MCF 10A (cell line): ENCODE measurements at regions of chr15 and their contacts with region 1.

Region 1: DNA sequence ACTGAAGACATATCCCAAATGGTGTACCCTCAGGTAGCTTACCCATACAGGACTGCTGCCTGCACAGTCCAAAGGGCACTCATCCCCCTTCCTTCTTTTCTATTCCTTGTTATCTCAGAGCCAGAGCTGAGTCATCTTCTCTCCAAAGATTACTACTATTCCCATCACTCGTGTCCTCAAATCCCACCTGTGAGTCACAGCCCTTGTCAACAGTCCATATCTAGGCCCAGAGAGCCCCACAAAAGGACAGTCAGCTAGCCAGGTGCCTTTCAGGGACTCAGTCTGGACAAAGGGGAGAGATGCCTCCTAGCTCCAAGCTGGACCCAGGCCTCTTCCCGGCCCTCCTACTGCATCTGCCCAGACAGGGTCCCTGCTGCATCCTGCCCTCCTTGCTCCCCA is 11.0 kb downstream of the PARP16 start:
- DNase-seq: no peak
- H3K4me3 Mint-ChIP-seq: no peak overlapping the region
- H3K27ac Mint-ChIP-seq: no peak overlapping the region
- H3K4me1 Mint-ChIP-seq: no peaks in the 10 kb centered on the region
- H3K27me3 Mint-ChIP-seq: no peaks in the 10 kb centered on the region
- CTCF ChIP-seq: no peak

Region 2: DNA sequence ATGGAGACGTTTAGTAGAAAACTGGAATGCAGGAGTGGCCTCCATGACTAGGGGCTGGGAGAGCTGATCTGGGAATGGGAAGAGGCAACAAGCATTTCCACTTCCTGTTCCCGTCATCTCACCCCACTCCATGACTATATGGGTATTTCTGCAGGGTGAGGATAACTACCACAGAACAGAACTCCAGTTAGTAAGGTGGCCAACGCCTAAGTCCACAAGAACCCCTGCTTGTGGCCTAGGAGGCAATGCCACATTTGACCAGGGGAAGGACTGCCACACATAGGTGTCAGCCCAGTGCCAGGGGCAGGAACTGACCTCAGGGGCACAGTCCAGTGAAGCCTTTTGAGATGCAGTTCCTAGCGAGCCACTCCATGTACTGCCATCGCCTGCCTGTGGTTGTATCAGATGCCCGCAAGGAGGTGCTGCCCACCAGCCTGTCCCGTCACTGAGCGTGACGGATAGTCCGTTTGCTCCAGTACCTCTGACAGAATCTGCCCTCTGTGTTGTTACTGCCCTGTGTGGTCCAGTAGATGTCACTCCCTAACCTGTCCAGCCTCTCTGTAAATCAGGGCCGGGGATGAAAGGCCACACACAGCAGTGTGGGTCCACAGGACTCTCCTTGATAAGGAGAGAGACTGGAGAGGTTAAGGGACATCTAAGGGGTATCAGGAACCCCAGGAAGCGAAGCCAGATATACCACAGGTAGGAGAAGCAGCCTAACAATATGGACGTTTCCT is 242.8 kb before region 1 on chr15:
- CTCF ChIA-PET with region 1: interaction called, 13 read pairs
- POLR2A ChIA-PET with region 1: no interaction called
- intact Hi-C with region 1: loop called (anchors 1 kb)
- DNase-seq: peak; percentile 84
- H3K4me3 Mint-ChIP-seq: no peak overlapping the region
- H3K27ac Mint-ChIP-seq: no peak overlapping the region
- H3K4me1 Mint-ChIP-seq: peaks cover 7% of the 10 kb centered on the region
- H3K27me3 Mint-ChIP-seq: no peaks in the 10 kb centered on the region
- CTCF ChIP-seq: peak; percentile 45

Region 3: GRCh38 chr15:65184868-65185738 is 90.6 kb before region 1 on chr15 and contains the start of gene CLPX:
- CTCF ChIA-PET with region 1: interaction called, 69 read pairs
- POLR2A ChIA-PET with region 1: interaction called, 13 read pairs
- intact Hi-C with region 1: no loop called
- DNase-seq: peak; percentile 94
- H3K4me3 Mint-ChIP-seq: peak within 1 kb of the TSS; percentile 94
- H3K27ac Mint-ChIP-seq: peak within 1 kb of the TSS; percentile 96
- H3K4me1 Mint-ChIP-seq: peaks cover 6% of the 10 kb centered on the region
- H3K27me3 Mint-ChIP-seq: no peaks in the 10 kb centered on the region
- CTCF ChIP-seq: no peak
- total RNA-seq, gene CLPX: 47.9 and 48.9 TPM in 2 replicates

Region 4: DNA sequence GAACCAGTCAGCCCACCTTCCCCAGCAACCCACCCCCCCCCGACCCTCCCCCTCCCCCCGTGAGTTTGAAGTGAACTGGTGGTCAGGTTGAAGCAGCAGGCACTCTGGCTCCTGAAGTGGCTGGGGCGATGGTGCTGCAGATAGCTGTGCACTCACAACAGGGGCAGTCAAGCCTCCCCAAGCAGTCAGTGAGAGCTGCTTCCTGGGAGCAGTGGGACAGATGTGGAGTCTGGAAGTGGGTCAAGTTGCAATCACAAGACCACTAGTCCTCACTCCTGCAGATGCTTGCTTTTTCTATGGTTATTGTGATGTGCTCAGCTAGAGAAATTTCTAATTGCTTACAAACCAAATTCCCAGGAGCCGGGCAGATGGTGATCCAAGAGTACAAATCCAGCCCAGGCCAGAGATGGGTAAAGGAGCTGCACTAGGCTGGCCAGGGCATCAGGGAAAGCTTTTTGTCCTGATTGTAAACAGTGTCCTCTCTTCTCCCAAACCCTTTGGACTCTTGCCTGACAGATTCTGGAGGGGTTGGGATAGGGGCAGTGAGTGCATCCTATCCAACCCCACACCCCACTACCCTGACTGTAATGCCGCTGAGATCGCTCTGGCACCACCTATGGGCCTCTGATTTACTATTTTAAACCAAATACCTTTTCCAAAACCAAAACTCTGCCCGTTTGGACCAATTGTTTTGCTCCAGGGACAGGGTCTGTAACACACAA is 80.7 kb before region 1 on chr15:
- CTCF ChIA-PET with region 1: interaction called, 69 read pairs
- POLR2A ChIA-PET with region 1: interaction called, 3 read pairs
- intact Hi-C with region 1: no loop called
- DNase-seq: no peak
- H3K4me3 Mint-ChIP-seq: no peak overlapping the region
- H3K27ac Mint-ChIP-seq: no peak overlapping the region
- H3K4me1 Mint-ChIP-seq: no peaks in the 10 kb centered on the region
- H3K27me3 Mint-ChIP-seq: no peaks in the 10 kb centered on the region
- CTCF ChIP-seq: no peak

Region 5: DNA sequence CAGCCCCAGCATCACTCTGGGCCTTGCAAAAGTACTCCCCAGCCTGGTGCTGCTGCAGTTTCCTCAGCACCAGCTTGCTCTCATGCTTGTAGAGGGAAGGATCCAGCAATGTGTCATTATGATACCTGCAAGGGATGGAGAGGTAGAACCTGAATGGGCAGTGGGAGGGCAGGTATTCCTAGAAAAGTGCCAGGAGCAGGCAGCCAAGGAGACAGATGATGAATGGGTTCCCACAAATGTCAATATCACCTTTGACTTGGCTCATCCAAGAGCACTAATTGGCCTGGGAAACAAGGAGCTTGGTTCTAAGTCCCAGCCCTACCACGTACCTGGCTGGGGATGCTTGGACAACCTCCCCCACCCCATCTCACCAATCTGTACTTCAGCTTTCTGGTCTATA is 73.8 kb before region 1 on chr15:
- CTCF ChIA-PET with region 1: interaction called, 12 read pairs
- POLR2A ChIA-PET with region 1: no interaction called
- intact Hi-C with region 1: no loop called
- DNase-seq: no peak
- H3K4me3 Mint-ChIP-seq: no peak overlapping the region
- H3K27ac Mint-ChIP-seq: no peak overlapping the region
- H3K4me1 Mint-ChIP-seq: no peaks in the 10 kb centered on the region
- H3K27me3 Mint-ChIP-seq: no peaks in the 10 kb centered on the region
- CTCF ChIP-seq: no peak

Region 6: GRCh38 chr15:65286704-65287519 is 11.2 kb after region 1 on chr15 and contains the start of gene PARP16:
- CTCF ChIA-PET with region 1: interaction called, 53 read pairs
- POLR2A ChIA-PET with region 1: interaction called, 19 read pairs
- intact Hi-C with region 1: no loop called
- DNase-seq: peak; percentile 81
- H3K4me3 Mint-ChIP-seq: peak within 1 kb of the TSS; percentile 79
- H3K27ac Mint-ChIP-seq: peak within 1 kb of the TSS; percentile 39
- H3K4me1 Mint-ChIP-seq: peaks cover 4% of the 10 kb centered on the region
- H3K27me3 Mint-ChIP-seq: no peaks in the 10 kb centered on the region
- CTCF ChIP-seq: peak; percentile 22
- total RNA-seq, gene PARP16: 5.9 and 6.1 TPM in 2 replicates

Region 7: GRCh38 chr15:65310431-65311137 is 34.9 kb after region 1 on chr15:
- CTCF ChIA-PET with region 1: no interaction called
- POLR2A ChIA-PET with region 1: no interaction called
- intact Hi-C with region 1: no loop called
- DNase-seq: peak; percentile 47
- H3K4me3 Mint-ChIP-seq: no peak overlapping the region
- H3K27ac Mint-ChIP-seq: no peak overlapping the region
- H3K4me1 Mint-ChIP-seq: no peaks in the 10 kb centered on the region
- H3K27me3 Mint-ChIP-seq: peaks cover 8% of the 10 kb centered on the region
- CTCF ChIP-seq: no peak